Heart right ventricle (tissue), 16 donors: ENCODE measurements at regions of chr11 and their contacts with region 1.

Region 1: GRCh38 chr11:44483919-44484610 is 81.4 kb upstream of the CD82 start:
- DNase-seq: peak in 1 of 2 donors; percentile 11
- ATAC-seq: peak in 4 of 8 donors; percentile 35 to 58 (median 46)
- H3K4me3 ChIP-seq: no peak overlapping the region
- H3K27ac ChIP-seq: no peak overlapping the region
- H3K4me1 ChIP-seq: no peaks in the 10 kb centered on the region
- H3K27me3 ChIP-seq: no peaks in the 10 kb centered on the region
- CTCF ChIP-seq: peak in 8 of 9 donors; percentile 20 to 54 (median 48)

Region 2: DNA sequence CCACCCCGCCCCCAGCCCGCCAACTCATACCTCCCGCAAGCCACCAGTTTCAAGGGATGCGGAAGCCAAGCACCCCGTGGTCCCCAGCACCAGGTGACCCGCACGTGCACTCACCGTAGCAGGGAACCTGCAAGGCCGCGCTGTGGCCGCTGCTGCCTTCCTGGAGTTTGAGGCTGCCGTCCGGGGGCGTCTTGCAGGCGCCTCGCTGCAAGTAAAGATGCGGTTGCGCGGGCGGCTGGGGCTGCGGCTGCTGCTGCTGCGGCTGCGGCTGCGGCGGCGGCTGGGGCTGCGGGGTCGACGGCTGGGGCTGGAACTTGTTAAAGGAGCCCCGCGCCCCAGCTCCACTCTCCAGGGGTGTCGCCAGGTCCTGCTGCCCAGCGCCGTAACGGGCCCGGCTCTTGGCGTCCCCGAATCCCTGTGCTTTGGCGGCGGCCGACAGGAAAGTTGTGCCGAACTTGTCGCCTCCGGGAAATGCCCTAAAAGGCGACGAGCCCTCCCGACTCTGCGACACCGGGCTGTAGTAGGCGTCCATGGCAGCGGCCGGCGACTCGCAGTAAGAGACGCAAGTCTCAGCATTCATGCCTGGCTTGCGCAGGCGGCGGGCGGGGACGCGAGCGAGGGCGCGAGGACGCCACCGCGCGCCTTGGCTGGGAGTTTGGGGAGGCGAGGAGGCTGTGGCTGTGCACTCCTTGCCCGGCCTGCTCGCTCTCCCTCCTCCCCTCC is 174.4 kb before region 1 on chr11 and contains the start of gene ALX4:
- intact Hi-C with region 1: loop called in 1 of 10 experiments (anchors 10 kb)
- DNase-seq: peak; percentile 21 to 54
- ATAC-seq: peak; percentile 53 to 82 (median 73)
- H3K4me3 ChIP-seq: peak within 1 kb of the TSS; percentile 34 to 58 (median 46)
- H3K27ac ChIP-seq: no peak within 1 kb of the TSS
- H3K4me1 ChIP-seq: peaks cover 17 to 45% (median 31%) of the 10 kb centered on the region in 9 donors
- H3K27me3 ChIP-seq: peaks cover 62 to 100% (median 100%) of the 10 kb centered on the region in 7 donors
- CTCF ChIP-seq: no peak
- total RNA-seq, gene ALX4: 0.05 to 0.07 (median 0.06) TPM in 5 of 10 donors, not detected in the others

Region 3: GRCh38 chr11:44351006-44351660 is 132.9 kb before region 1 on chr11:
- intact Hi-C with region 1: loop called in 1 of 10 experiments (anchors 10 kb)
- DNase-seq: no peak
- ATAC-seq: no peak
- H3K4me3 ChIP-seq: no peak overlapping the region
- H3K27ac ChIP-seq: no peak overlapping the region
- H3K4me1 ChIP-seq: no peaks in the 10 kb centered on the region
- H3K27me3 ChIP-seq: peaks cover 0 to 23% (median 0%) of the 10 kb centered on the region in 7 donors
- CTCF ChIP-seq: no peak

Region 4: GRCh38 chr11:44398266-44399045 is 85.6 kb before region 1 on chr11:
- intact Hi-C with region 1: no loop called
- DNase-seq: no peak
- ATAC-seq: peak in 2 of 8 donors; percentile 22 to 41
- H3K4me3 ChIP-seq: no peak overlapping the region
- H3K27ac ChIP-seq: no peak overlapping the region
- H3K4me1 ChIP-seq: peaks cover 0 to 7% (median 0%) of the 10 kb centered on the region in 9 donors
- H3K27me3 ChIP-seq: peaks cover 0 to 11% (median 0%) of the 10 kb centered on the region in 7 donors
- CTCF ChIP-seq: no peak

Region 5: GRCh38 chr11:44434191-44434590 is 49.9 kb before region 1 on chr11:
- intact Hi-C with region 1: loop called in 1 of 10 experiments (anchors 5 kb)
- DNase-seq: no peak
- ATAC-seq: no peak
- H3K4me3 ChIP-seq: no peak overlapping the region
- H3K27ac ChIP-seq: no peak overlapping the region
- H3K4me1 ChIP-seq: peaks cover 0 to 22% (median 8%) of the 10 kb centered on the region in 9 donors
- H3K27me3 ChIP-seq: peaks cover 0 to 11% (median 0%) of the 10 kb centered on the region in 7 donors
- CTCF ChIP-seq: no peak